Right ventricle myocardium inferior (tissue), 1 donor: ENCODE measurements at regions of chr10 and their contacts with region 1.

Region 1: DNA sequence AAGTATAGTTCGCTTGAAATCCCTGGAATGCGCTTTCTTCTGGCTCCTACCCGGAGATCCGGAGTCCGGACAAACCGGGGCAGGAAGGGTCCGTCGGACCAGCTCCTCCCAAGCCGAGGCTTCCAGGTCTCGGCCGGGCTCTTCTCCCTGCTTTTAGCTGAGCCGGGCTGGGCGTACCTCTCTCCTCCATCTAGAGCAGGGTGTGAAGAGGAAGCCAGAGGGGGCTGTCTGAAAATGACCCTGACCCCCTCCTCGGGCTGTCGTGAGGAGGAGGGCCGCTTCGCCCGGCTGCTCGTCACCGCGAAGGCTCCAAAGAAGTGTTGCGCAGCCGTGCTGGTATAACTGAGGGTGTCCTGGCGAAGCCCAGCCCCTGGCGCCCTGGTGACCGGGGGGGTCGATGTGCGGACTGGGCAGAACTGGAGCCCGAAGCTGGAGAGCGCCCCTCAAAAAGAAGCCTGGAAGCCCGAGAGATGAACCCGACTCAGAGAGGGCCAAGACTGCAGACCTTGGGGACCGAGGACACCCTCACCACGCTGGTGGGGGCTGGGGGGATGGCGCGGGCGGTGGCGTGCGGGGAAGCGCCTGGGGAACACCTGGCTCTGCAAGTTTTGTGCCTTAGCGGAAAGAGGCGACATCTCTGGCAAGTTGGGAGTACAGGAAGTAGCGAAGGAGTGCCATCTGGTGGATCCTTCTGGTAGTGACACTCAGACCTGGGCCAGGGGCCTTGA is 5.7 kb downstream of the KAZALD1 start:
- DNase-seq: no peak
- ATAC-seq: peak; percentile 45

Region 2: DNA sequence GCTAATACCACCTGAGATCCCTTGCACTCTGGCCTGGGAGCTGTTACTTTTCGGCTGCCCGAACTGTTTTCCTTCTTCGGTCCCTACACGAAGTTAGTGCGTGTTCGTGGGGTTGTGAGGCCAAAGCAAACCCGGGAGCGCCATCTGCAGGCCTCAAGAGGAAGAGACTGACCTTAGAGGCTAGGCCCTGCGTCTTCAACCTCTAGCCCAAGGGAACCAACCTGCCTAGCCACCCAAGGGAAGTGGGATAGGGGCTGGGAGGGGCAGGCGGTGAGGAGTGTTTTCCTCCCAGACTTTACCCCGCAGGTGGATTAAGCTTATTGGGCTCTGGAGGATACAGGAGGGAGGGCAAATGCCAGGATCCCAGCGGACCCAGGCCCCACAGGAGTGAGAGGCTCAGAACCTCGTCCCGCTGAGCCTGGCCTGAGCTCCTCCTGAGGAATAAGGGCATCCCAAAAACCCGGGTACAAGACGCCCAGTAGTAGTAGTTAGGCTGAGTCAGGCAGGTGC is 323.8 kb before region 1 on chr10:
- intact Hi-C with region 1: no loop called
- DNase-seq: no peak
- ATAC-seq: no peak

Region 3: GRCh38 chr10:100993986-100994708 is 73.4 kb before region 1 on chr10:
- intact Hi-C with region 1: loop called (anchors 2 kb)
- DNase-seq: no peak
- ATAC-seq: no peak

Region 4: DNA sequence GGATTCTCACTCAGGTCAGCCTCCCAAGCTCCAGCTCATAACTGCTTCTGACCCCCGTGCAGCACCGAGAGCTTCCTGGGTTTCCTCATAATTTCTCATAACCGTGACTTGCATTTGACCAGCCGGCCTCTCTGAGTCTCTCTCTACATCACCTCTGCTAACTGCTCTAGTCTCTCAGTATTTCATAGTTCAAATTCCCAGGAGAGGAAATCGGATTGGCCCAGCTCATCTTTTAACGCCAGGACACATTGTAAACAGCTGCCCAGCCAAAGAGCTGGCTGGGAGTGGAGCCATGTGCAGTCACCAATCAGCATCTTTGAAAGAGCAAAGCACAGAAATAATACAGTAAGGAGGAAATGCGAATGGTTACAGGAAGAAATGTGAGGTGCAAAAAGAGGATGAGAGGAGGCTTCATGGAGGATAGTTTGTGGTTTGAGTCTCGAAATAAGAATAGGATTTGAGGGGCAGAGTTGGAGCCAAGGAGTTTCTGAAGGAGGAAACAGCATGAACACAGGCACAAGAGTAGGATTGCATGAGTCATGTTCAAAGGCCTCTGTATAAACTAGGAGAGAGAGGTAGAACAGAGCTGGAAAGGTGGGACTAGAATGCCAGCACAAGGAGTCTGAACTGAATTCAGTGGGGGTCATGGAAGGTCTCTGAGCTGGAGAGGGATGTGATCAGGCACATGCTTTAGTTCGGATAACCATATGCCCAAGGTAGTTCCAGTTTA is 177.0 kb after region 1 on chr10:
- intact Hi-C with region 1: no loop called
- DNase-seq: no peak
- ATAC-seq: no peak

Region 5: DNA sequence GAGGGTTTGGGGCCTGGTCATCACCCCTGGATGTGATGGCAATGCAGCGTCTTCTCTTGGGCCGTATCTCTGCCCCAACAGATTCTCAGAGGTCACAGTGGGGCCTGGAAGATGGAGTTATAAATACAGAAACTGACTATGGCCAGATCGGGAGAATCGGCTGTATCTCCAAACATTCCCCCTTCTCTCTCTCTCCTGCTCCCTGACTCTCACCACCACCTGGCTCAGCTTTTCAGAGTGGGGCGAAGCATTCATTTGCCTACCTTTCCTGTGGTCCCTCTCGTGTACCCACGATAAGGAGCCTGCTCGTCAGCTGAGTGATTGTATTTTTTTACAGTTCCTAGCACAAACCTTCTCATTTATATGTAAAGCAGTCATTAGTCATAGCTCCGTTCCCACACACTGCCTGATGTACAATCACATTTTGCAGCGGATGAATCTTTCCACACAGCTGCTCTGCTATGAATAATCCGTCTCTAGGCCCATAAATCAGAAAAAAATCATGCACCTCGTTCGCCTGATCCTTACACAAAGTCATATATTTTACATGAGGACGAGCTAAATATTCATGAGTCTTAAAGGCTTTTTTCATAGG is 263.2 kb after region 1 on chr10:
- intact Hi-C with region 1: no loop called
- DNase-seq: no peak
- ATAC-seq: no peak